ENCODE measurements at regions of chr3 and their contacts with region 1.

Region 1: DNA sequence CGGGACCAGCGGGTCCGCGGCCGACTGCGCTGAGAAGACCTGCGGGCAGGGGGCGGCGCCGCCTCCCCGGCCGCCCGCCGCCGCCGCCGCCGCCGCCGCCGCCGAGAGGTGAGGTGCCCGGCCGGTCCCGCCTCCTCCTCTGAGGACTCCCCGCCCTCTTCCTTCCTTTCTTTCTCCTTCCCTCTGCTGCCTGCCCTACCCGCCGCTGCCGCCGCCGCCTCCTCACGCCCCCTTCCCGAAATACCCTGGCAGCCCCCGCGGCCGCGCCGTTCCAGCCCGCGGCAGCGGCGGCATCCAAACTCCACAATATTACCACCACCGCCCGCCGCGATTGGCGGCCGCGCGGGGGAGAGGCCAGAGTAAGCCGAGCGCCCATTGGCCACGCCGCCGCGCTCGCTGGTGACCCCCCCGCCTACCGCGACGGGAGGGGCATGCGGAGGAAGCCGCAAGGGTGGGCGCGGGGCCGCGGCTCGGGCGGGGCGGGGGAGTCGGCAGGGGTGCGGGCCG is 61.8 kb upstream of the ANKRD28 start:
- DNase-seq: peak; percentile 86
- ATAC-seq: peak; percentile 85
- H3K4me3 Mint-ChIP-seq: peak overlapping the region; percentile 83
- H3K27ac Mint-ChIP-seq: peak overlapping the region; percentile 83
- H3K4me1 Mint-ChIP-seq: peaks cover 42% of the 10 kb centered on the region
- H3K27me3 Mint-ChIP-seq: no peaks in the 10 kb centered on the region

Region 2: GRCh38 chr3:15427182-15427880 is 432.2 kb before region 1 on chr3 and contains the starts of genes EAF1 and METTL6:
- CTCF ChIA-PET with region 1: no interaction called
- POLR2A ChIA-PET with region 1: interaction called, 4 read pairs
- intact Hi-C with region 1: loop called in 1 of 2 experiments (anchors 2 kb)
- DNase-seq: peak; percentile 92
- ATAC-seq: peak; percentile 83
- H3K4me3 Mint-ChIP-seq: peak within 1 kb of the TSS; percentile 90
- H3K27ac Mint-ChIP-seq: peak within 1 kb of the TSS; percentile 97
- H3K4me1 Mint-ChIP-seq: peaks cover 45% of the 10 kb centered on the region
- H3K27me3 Mint-ChIP-seq: no peaks in the 10 kb centered on the region
- total RNA-seq, gene EAF1: 21.2 to 25.6 TPM
- total RNA-seq, gene METTL6: 13.0 to 19.5 TPM

Region 3: DNA sequence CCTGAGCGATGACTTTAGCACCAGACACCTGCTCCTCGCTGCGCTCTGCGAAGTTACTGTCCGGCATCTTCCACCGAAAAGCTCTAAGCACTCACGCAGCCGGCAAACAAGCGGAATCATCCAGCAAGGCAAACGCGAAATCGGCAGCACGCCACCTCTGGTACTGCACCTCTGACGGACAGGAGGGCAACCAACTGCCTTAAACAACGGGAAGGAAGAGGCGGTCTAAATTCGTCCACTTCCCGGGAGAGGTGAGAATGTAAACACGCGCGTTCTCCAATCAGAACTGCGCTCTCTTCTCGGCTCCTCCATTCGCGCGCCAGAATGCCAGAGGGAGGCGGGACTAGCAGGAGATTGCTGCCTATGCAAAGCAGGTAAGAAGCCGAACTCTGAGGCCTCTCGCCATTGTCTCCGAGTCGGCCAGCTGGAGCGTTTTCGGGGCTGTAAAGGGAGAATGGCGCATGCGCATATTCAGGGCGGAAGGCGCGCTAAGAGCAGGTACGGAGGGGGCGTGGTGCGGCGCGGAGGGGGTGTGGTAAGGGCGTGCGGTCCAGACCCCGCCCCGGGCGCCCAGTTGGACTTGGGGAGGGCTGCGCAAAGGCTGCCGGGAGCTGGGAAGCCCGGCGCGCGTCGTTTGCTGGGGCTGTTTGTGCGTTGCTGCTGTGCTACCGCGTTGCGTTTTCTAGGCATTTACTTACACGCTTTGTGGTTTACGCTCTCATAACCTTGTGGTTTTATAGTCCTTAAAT is 258.0 kb before region 1 on chr3 and contains the starts of genes BTD and HACL1:
- CTCF ChIA-PET with region 1: interaction called, 3 read pairs
- POLR2A ChIA-PET with region 1: no interaction called
- intact Hi-C with region 1: loop called (anchors 1 kb)
- DNase-seq: peak; percentile 99
- ATAC-seq: peak; percentile 94
- H3K4me3 Mint-ChIP-seq: peak within 1 kb of the TSS; percentile 100
- H3K27ac Mint-ChIP-seq: peak within 1 kb of the TSS; percentile 98
- H3K4me1 Mint-ChIP-seq: peaks cover 41% of the 10 kb centered on the region
- H3K27me3 Mint-ChIP-seq: no peaks in the 10 kb centered on the region
- total RNA-seq, gene BTD: 3.8 to 4.4 TPM
- total RNA-seq, gene HACL1: 22.3 to 23.2 TPM

Region 4: GRCh38 chr3:15629860-15630597 is 229.5 kb before region 1 on chr3:
- CTCF ChIA-PET with region 1: no interaction called
- POLR2A ChIA-PET with region 1: no interaction called
- intact Hi-C with region 1: loop called in 1 of 2 experiments (anchors 2 kb)
- DNase-seq: peak; percentile 73
- ATAC-seq: peak; percentile 96
- H3K4me3 Mint-ChIP-seq: peak overlapping the region; percentile 52
- H3K27ac Mint-ChIP-seq: peak overlapping the region; percentile 90
- H3K4me1 Mint-ChIP-seq: peaks cover 50% of the 10 kb centered on the region
- H3K27me3 Mint-ChIP-seq: no peaks in the 10 kb centered on the region

Region 5: GRCh38 chr3:15845475-15845874 is 14.1 kb before region 1 on chr3:
- CTCF ChIA-PET with region 1: interaction called, 4 read pairs
- POLR2A ChIA-PET with region 1: interaction called, 12 read pairs
- intact Hi-C with region 1: no loop called
- DNase-seq: peak; percentile 10
- ATAC-seq: peak; percentile 88
- H3K4me3 Mint-ChIP-seq: no peak overlapping the region
- H3K27ac Mint-ChIP-seq: peak overlapping the region; percentile 69
- H3K4me1 Mint-ChIP-seq: peaks cover 42% of the 10 kb centered on the region
- H3K27me3 Mint-ChIP-seq: no peaks in the 10 kb centered on the region

Region 6: DNA sequence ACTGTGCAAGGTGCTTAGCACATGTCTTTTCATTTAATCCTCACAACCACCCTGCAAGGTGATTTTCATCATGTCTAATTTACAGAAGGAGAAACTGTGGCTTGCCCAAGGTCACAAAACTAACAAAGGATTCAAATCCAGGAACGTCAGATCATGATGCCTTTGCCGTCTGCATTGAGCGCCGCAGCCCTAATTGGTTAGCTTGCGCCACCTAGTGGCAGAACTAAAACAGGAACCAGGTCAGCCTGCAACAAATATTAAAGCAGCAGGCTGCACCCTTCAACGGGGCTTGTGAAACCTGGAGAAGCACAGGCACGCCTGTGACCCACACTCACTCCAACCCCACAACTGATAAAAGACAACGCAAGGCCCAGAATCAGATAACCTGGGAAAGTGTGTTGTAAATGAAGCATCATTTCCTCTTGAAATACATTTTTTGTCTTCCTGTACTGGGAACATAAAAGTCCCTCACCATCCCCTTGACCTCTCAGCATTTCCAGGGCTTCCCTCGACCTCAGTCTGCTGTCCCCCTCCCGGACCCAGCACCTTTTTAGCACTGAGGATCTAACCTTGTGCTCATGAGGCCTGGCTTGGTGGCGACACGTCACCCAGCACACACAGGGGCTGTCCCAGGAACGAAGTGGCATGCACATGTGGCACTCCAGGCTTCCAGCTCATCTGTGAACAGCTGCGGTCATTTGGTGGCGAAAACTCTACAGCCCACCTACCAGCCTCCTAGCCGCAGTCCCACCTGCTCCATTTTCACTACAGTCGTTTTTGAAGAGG is 387.9 kb after region 1 on chr3:
- CTCF ChIA-PET with region 1: no interaction called
- POLR2A ChIA-PET with region 1: no interaction called
- intact Hi-C with region 1: loop called in 1 of 2 experiments (anchors 2 kb)
- DNase-seq: peak; percentile 88
- ATAC-seq: peak; percentile 83
- H3K4me3 Mint-ChIP-seq: no peak overlapping the region
- H3K27ac Mint-ChIP-seq: no peak overlapping the region
- H3K4me1 Mint-ChIP-seq: peaks cover 17% of the 10 kb centered on the region
- H3K27me3 Mint-ChIP-seq: no peaks in the 10 kb centered on the region

Region 7: GRCh38 chr3:17742108-17742879 is 1882.7 kb after region 1 on chr3 and contains the start of gene TBC1D5:
- CTCF ChIA-PET with region 1: no interaction called
- POLR2A ChIA-PET with region 1: no interaction called
- intact Hi-C with region 1: loop called in 1 of 2 experiments (anchors 10 kb)
- DNase-seq: peak; percentile 97
- ATAC-seq: peak; percentile 97
- H3K4me3 Mint-ChIP-seq: peak within 1 kb of the TSS; percentile 93
- H3K27ac Mint-ChIP-seq: peak within 1 kb of the TSS; percentile 93
- H3K4me1 Mint-ChIP-seq: peaks cover 40% of the 10 kb centered on the region
- H3K27me3 Mint-ChIP-seq: no peaks in the 10 kb centered on the region
- total RNA-seq, gene TBC1D5: 53.9 to 56.9 TPM